Cardiac septum (tissue), 1 donor: ENCODE measurements at regions of chr7 and their contacts with region 1.

Region 1: GRCh38 chr7:30911561-30911969 is at the start of gene AQP1:
- DNase-seq: peak; percentile 92
- total RNA-seq, gene AQP1: 155 TPM

Region 2: DNA sequence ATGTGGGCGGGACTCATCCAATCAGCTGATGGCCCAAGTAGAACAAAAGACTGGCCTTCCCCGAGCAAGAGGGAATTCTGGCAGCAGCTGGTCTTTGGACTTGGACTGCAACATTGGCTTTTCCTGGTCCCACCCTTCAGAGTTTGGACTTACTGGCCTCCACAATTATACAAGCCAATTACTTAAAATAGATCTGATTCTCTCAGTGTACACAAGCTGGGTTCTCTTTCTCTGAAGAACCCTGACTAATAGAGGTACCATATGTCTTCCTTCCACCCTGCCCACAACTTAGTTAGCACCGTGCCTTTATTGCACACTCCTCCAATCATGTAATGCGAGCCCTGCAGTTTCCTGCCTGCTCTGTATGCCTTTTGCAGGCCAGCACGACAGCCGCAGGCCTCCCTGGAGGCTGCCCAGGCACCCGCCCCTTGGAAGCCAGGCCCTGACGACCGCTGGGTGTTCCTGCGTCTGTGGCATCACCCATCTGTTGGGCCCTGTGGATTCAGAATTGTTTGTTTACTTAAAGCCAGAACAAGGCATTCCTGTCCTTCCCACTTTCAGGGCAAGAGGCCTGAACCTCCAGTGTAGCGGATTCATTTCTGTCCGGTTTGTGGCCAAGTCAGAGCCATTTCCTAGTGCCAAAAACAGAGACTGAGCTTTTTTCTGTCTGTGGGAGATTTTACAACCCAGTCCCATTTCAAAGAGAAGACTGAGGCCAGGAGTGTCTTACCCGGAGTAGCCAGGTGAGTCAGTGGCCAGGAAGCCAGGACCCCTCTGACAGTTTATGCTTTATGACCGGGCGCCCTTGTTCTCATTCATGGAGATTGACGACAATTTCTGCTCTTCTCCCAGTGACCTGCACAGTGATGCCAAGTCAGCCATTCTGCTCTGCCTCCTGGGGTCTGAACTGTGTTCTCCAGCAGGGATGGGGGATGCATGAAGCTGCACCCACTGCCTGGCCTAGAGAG is 160.6 kb before region 1 on chr7:
- intact Hi-C with region 1: loop called (anchors 5 kb)
- DNase-seq: peak; percentile 88

Region 3: GRCh38 chr7:30764030-30764975 is 147.3 kb before region 1 on chr7:
- intact Hi-C with region 1: no loop called
- DNase-seq: no peak

Region 4: DNA sequence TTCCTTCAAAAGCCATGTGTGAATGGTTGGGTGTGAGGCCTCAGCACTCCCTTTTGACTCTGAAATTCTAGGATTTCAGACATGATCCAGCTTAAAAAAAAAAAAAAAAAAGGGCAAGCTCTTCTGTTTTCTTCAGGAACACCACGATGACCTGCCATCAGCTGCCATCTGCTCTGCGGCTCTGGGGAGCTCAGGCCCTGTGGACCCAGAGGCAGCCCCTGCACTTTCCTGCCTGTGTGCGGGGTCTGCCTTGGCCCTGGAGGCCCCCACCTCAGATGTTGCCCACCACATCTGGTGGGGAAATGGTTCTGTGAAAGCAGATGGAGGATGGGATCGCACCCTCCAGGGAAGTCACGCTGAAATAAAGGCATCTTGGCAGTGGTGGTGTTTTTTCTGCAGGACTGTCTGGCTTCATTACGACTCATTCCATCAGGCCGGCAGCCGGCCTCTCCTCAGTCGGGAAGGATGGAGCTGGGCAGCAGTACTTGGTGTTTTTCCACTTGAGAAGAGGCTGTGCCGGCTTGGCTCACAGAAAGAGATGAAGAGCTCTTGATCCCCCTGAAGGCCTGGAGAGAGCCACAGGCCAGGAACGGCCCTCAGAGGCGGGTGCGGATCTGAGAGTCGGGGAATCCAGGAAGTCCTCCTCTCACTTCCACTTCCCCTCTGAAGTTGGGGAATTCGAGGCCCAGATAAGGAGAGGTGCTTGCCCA is 66.0 kb before region 1 on chr7:
- intact Hi-C with region 1: no loop called
- DNase-seq: peak; percentile 71